ENCODE measurements at regions of chr4 and their contacts with region 1.

Region 1: DNA sequence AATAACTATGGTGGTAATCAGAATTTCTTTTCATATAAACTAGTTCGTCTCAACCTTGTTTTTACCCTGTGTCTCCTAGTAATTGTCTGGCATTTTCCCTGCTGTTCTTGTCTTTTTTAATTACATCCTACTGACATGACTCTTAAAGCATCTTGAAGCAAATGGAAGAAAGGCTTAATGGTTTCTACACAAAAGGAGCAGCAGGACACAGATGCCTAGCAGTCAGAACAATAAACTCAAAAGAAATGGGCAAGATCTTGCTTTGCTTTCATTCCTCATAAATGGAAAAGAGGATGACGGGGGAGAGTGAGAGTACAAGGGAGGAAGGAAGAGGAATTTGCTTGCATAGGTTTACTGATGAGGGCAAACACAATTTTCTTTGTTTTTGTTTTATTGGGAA is 293.2 kb upstream of the EMCN start:
- DNase-seq: no peak
- H3K4me3 Mint-ChIP-seq: no peak overlapping the region
- H3K27ac Mint-ChIP-seq: no peak overlapping the region
- H3K4me1 Mint-ChIP-seq: no peaks in the 10 kb centered on the region
- H3K27me3 Mint-ChIP-seq: no peaks in the 10 kb centered on the region

Region 2: DNA sequence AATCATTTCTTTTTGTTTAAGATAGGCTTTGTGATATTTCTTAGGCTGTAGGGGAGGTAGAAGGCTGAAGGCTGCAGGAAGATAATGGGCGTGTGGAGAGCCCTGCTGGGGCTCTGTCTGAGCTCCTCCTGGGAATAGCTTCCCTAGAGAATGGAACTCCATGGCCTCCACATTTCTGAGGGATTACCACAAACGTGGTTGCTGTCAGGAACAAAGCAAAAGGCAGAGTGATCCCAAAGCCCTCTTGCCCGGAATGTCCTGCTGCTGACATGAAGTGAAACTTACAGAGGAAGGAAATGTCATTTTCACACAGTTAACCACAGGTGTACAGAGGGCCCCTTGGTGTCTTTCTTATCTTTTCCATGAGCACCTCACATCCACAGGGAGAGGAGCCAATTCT is 710.1 kb before region 1 on chr4:
- CTCF ChIA-PET with region 1: no interaction called
- POLR2A ChIA-PET with region 1: no interaction called
- intact Hi-C with region 1: loop called (anchors 5 kb)
- DNase-seq: no peak
- H3K4me3 Mint-ChIP-seq: no peak overlapping the region
- H3K27ac Mint-ChIP-seq: no peak overlapping the region
- H3K4me1 Mint-ChIP-seq: peaks cover 14% of the 10 kb centered on the region
- H3K27me3 Mint-ChIP-seq: no peaks in the 10 kb centered on the region

Region 3: GRCh38 chr4:100790836-100791615 is 20.0 kb before region 1 on chr4:
- CTCF ChIA-PET with region 1: no interaction called
- POLR2A ChIA-PET with region 1: no interaction called
- intact Hi-C with region 1: no loop called
- DNase-seq: no peak
- H3K4me3 Mint-ChIP-seq: no peak overlapping the region
- H3K27ac Mint-ChIP-seq: no peak overlapping the region
- H3K4me1 Mint-ChIP-seq: no peaks in the 10 kb centered on the region
- H3K27me3 Mint-ChIP-seq: no peaks in the 10 kb centered on the region

Measured in activated CD4-positive, alpha-beta memory T cell treated with anti-CD3 and anti-CD28 coated beads for 36 hours (primary cell).